ENCODE measurements at regions of chr4 and their contacts with region 1.

Region 1: GRCh38 chr4:112231779-112232713 is at the start of gene AP1AR:
- DNase-seq: peak; percentile 73 to 85
- H3K4me3 ChIP-seq: peak within 1 kb of the TSS; percentile 70
- H3K27ac ChIP-seq: peak within 1 kb of the TSS; percentile 94
- H3K4me1 ChIP-seq: peaks cover 44% of the 10 kb centered on the region
- H3K27me3 ChIP-seq: no peaks in the 10 kb centered on the region
- CTCF ChIP-seq: no peak; the same call in 1 of the 2 replicates
- total RNA-seq, gene AP1AR: 27.6 and 35.8 TPM in 2 replicates

Region 2: GRCh38 chr4:112075129-112075753 is 156.8 kb before region 1 on chr4:
- CTCF ChIA-PET with region 1: no interaction called
- POLR2A ChIA-PET with region 1: no interaction called
- intact Hi-C with region 1: loop called (anchors 2 kb)
- DNase-seq: peak; percentile 31 to 41
- H3K4me3 ChIP-seq: no peak overlapping the region
- H3K27ac ChIP-seq: no peak overlapping the region
- H3K4me1 ChIP-seq: no peaks in the 10 kb centered on the region
- H3K27me3 ChIP-seq: no peaks in the 10 kb centered on the region
- CTCF ChIP-seq: peak; percentile 79

Region 3: GRCh38 chr4:112099701-112100297 is 132.2 kb before region 1 on chr4:
- CTCF ChIA-PET with region 1: interaction called, 5 read pairs
- POLR2A ChIA-PET with region 1: interaction called, 10 read pairs
- intact Hi-C with region 1: loop called (anchors 1 kb)
- DNase-seq: peak in 1 of 2 experiments; percentile 63
- H3K4me3 ChIP-seq: no peak overlapping the region
- H3K27ac ChIP-seq: no peak overlapping the region
- H3K4me1 ChIP-seq: peaks cover 5% of the 10 kb centered on the region; the same call in 1 of the 2 replicates
- H3K27me3 ChIP-seq: no peaks in the 10 kb centered on the region
- CTCF ChIP-seq: peak; percentile 87

Region 4: GRCh38 chr4:112109186-112110058 is 122.6 kb before region 1 on chr4:
- CTCF ChIA-PET with region 1: no interaction called
- POLR2A ChIA-PET with region 1: no interaction called
- intact Hi-C with region 1: loop called (anchors 2 kb)
- DNase-seq: peak in 1 of 2 experiments; percentile 71
- H3K4me3 ChIP-seq: no peak overlapping the region
- H3K27ac ChIP-seq: peak overlapping the region; percentile 25; the same call in 1 of the 2 replicates
- H3K4me1 ChIP-seq: peaks cover 47% of the 10 kb centered on the region
- H3K27me3 ChIP-seq: no peaks in the 10 kb centered on the region
- CTCF ChIP-seq: no peak

Region 5: GRCh38 chr4:112145326-112145819 is 86.7 kb before region 1 on chr4 and contains the start of gene FAM241A:
- CTCF ChIA-PET with region 1: no interaction called
- POLR2A ChIA-PET with region 1: no interaction called
- intact Hi-C with region 1: loop called (anchors 1 kb)
- DNase-seq: peak; percentile 62 to 80
- H3K4me3 ChIP-seq: peak within 1 kb of the TSS; percentile 89
- H3K27ac ChIP-seq: peak within 1 kb of the TSS; percentile 51
- H3K4me1 ChIP-seq: peaks cover 28% of the 10 kb centered on the region
- H3K27me3 ChIP-seq: no peaks in the 10 kb centered on the region
- CTCF ChIP-seq: no peak
- total RNA-seq, gene FAM241A: 0.78 and 1.4 TPM in 2 replicates

Region 6: DNA sequence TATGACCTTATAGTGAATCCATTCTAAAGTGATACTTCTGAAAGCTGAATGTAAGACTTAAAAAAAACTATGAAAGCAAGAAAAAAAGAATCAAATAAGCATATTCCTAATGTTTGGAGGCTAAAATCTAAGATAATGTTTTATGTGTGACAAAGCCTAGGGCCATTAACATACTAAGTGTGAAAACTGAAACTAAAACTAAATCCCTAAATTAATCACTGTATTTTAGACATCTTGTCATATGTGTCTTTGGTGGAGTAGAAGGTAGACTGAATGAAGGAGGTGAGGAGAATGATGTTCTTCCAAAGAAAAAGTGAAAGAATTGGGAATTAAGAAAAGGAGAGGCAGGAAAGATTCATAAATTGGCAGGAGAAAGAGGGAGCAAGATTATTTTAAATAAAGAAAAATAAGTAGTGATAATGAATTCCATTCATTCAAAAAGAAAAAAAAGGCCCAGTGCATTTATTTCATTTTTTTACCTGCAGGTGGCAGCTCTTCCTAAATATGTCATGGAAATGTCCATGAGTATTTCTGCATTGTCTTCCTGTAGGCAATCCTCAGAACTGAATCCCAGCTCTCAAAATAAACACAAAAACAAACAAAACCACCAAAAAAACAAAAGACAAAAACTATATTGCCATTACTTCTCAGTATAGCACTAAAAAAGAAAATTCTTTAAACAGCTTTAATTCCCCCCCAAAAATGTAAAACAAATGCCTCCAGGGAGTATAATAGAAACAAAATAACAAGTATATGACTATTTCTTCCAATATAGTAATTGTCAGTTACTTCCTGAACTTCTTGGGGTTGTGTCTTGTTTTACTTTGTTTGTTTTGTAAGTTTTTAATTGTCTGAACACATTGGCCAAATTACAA is 17.4 kb before region 1 on chr4:
- CTCF ChIA-PET with region 1: no interaction called
- POLR2A ChIA-PET with region 1: interaction called, 5 read pairs
- intact Hi-C with region 1: loop called (anchors 1 kb)
- DNase-seq: peak in 1 of 2 experiments; percentile 43
- H3K4me3 ChIP-seq: no peak overlapping the region
- H3K27ac ChIP-seq: peak overlapping the region; percentile 22
- H3K4me1 ChIP-seq: no peaks in the 10 kb centered on the region
- H3K27me3 ChIP-seq: no peaks in the 10 kb centered on the region
- CTCF ChIP-seq: peak; percentile 65; the same call in 1 of the 2 replicates

Region 7: DNA sequence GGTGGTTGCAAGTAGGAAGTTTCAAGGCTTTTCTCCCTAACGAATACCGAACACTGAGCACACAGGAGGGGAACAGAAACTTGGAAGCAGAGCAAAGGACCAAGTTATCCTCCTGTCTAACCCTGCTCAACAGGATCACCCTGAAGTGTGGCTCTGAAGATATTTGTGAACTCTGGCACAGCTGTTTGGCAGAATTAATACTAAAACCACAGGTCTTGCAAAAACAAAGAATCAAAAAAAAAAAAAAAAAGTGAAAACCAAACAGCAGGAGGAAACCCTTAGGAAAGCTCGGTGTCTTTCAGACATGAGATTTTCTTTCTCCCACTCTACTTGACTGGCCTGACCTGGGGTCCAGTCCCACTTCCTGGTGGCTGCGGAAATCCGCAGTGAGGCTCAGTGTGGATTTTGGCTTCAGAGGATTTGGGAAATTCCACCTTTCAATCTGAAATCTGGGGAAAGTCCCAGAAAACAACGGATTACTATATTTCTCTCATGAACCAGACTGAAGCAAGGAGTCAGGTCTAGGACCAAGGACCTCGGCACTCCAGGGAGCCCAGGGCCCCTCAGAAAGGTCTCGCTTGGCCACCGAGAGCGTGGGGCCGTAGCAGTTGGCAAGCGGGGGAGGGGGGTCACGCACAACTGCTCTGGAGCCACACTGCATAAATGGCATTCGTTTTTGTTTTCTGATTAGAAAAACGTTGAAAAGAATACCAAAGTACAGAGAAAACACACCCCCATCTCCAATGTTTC is 52.8 kb after region 1 on chr4:
- CTCF ChIA-PET with region 1: interaction called, 20 read pairs
- POLR2A ChIA-PET with region 1: no interaction called
- intact Hi-C with region 1: no loop called
- DNase-seq: peak; percentile 16 to 72
- H3K4me3 ChIP-seq: peak overlapping the region; percentile 79
- H3K27ac ChIP-seq: peak overlapping the region; percentile 40
- H3K4me1 ChIP-seq: peaks cover 15% of the 10 kb centered on the region
- H3K27me3 ChIP-seq: no peaks in the 10 kb centered on the region
- CTCF ChIP-seq: no peak